CD4-positive, alpha-beta T cell (primary cell): ENCODE measurements at regions of chr1 and their contacts with region 1.

Region 1: DNA sequence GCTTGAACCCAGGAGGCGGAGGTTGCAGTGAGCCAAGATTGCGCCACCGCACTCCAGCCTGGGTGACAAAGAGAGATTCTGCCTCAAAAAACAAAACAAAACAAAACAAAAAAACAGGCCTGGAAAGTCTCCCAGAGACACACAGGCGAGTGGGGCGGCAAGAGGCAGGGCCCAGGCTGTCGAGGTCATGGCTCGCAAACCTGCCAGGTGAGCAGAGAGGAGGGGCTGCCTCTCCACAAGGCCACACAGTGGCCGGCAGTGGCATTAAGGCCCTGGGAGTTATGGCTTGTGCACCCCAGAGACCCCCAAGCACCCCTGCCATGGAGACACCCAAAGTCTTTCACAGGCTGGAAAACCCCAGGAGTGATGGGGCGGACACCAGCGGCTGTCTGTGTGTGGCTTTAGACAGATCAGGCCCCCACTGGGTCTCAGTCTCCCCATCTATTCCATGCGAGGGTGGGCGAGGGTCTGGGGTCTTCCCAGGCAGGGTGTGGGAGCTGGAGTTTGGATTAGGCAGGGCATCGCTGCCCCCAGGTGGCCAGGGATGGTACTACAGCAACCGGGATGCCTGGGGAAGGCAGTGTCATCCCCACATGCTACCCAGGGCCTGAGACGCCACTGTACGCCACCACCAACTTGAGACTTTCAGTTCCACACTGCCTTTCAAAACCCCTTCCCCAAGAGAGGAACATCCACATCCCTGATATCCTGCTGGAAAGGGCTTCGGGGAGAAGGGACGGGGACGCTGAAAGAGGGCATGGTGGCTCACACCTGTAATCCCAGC is 7.3 kb upstream of the CTRC start:
- DNase-seq: peak; percentile 55 to 84 (median 74)
- ATAC-seq: peak; percentile 77
- H3K4me3 ChIP-seq: no peak overlapping the region
- H3K4me3 Mint-ChIP-seq: no peak overlapping the region
- H3K27ac ChIP-seq: no peak overlapping the region
- H3K27ac Mint-ChIP-seq: peak overlapping the region; percentile 61
- H3K4me1 ChIP-seq: peaks cover 6% of the 10 kb centered on the region
- H3K4me1 Mint-ChIP-seq: no peaks in the 10 kb centered on the region
- H3K27me3 ChIP-seq: no peaks in the 10 kb centered on the region
- H3K27me3 Mint-ChIP-seq: no peaks in the 10 kb centered on the region
- CTCF ChIP-seq: peak; percentile 96

Region 2: DNA sequence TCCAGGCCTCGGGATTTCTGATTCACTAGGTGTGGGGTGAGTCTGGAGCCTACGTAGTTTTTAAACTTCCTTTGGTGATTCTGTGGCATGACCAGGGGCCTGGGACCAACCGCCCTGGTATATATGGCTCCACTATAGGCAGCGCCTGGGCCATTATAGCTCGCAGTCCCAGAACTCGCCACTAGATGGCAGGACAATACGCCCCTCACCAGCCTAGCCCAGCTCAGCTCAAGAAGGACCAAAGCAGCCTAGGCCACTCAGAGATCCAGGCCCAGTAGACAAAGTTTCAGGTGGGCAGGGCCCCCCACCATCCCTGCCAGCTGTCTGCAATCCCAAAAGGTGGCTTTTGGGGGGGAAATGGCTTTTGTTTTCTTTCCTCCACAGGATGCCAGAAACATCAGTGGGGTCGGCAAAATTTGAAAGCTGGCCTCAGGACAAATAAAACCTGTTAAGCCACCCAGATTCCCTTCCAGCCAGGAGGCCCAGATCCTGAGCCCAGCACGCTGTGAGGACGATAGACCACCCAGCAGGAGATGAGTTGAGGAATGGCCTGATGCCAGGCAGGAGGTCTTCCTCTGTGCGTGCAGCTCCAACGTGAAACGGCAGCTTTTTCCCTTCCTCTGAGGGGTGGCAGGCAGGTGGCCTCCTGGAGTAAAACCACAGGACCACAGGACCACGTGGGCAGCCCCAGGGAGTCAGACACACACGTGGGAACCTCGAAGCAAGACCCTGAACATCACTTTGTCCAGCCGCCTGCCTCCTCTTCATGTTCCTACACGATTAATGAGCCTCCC is 302.3 kb before region 1 on chr1:
- CTCF ChIA-PET with region 1: no interaction called
- POLR2A ChIA-PET with region 1: no interaction called
- intact Hi-C with region 1: loop called (anchors 1 to 5 kb)
- DNase-seq: peak; percentile 34 to 77 (median 59)
- ATAC-seq: peak; percentile 74
- H3K4me3 ChIP-seq: no peak overlapping the region
- H3K4me3 Mint-ChIP-seq: no peak overlapping the region
- H3K27ac ChIP-seq: no peak overlapping the region
- H3K27ac Mint-ChIP-seq: no peak overlapping the region
- H3K4me1 ChIP-seq: no peaks in the 10 kb centered on the region
- H3K4me1 Mint-ChIP-seq: no peaks in the 10 kb centered on the region
- H3K27me3 ChIP-seq: peaks cover 3 to 13% of the 10 kb centered on the region in 2 experiments
- H3K27me3 Mint-ChIP-seq: peaks cover 17% of the 10 kb centered on the region
- CTCF ChIP-seq: peak; percentile 86

Region 3: DNA sequence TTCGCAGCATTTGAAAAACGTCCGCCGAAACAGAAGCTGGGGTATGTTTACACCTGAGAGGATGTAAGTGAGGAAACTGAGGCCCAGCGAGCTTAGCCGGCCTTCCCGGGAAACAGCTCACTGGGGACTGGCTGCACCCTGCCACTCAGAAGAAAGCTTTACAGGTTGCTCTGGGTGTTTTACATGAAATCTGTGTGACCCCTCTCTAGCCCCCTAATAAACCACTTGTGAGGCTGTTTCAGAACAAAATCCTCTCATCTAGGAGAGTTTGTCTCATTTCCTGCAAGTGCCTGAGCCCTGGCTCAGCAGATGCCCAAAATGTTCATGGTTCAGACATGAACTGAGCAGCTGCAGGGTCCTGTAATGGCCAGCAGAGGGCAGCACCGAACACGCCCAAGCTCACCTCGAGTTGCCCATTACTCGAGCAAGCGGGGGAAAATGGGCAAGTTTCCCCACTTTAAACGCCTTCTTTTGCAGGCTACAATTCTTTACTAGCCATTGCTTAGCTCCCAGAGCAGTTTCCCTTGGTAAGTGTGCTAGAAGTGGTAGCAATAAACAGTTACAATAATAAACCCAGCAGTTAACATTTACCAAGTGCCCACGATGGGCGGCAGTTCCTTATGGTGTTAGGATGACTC is 107.5 kb before region 1 on chr1:
- CTCF ChIA-PET with region 1: interaction called, 67 read pairs
- POLR2A ChIA-PET with region 1: interaction called, 10 read pairs
- intact Hi-C with region 1: loop called (anchors 1 kb)
- DNase-seq: peak; percentile 59 to 88 (median 66)
- ATAC-seq: peak; percentile 89
- H3K4me3 ChIP-seq: no peak overlapping the region
- H3K4me3 Mint-ChIP-seq: no peak overlapping the region
- H3K27ac ChIP-seq: no peak overlapping the region
- H3K27ac Mint-ChIP-seq: no peak overlapping the region
- H3K4me1 ChIP-seq: peaks cover 6% of the 10 kb centered on the region
- H3K4me1 Mint-ChIP-seq: no peaks in the 10 kb centered on the region
- H3K27me3 ChIP-seq: peaks cover 1 to 4% of the 10 kb centered on the region in 2 experiments
- H3K27me3 Mint-ChIP-seq: peaks cover 11% of the 10 kb centered on the region
- CTCF ChIP-seq: peak; percentile 96

Region 4: DNA sequence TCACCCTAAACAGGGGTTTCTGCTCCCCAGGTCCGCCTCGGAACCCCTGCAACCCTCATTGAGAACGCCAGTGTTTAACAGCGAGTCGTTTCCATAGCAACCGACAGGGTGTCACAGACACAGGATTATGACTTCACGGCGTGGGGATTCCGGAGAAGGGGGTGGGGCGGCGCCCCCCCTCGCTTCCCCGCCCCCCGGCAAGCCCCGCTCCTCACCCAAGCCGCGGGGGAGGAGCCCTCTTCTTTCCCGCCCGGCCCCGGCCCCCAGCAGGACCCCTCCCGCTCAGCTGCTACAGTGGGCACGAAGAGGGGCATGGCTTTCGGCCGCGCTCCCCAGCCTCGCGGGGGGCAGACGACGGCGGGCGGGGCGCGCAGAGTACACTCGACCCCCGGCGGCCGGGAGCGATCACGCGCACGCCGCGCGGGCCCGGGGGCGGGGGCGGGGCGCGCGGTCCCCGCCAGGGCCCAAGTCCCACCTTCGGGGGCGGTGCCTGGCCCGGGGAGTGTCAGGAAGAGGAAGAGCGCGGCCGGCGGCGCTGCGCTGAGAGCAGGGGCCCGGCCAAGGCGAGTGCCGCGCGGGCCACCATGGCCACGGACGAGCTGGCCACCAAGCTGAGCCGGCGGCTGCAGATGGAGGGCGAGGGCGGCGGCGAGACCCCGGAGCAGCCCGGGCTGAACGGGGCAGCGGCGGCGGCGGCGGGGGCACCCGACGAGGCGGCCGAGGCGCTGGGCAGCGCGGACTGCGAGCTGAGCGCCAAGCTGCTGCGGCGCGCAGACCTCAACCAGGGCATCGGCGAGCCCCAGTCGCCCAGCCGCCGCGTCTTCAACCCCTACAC is 21.4 kb before region 1 on chr1 and contains the start of gene EFHD2:
- CTCF ChIA-PET with region 1: interaction called, 11 read pairs
- POLR2A ChIA-PET with region 1: interaction called, 3 read pairs
- intact Hi-C with region 1: loop called in 1 of 2 experiments (anchors 2 kb)
- DNase-seq: peak; percentile 62 to 99 (median 85)
- ATAC-seq: peak; percentile 79
- H3K4me3 ChIP-seq: peak within 1 kb of the TSS; percentile 94
- H3K4me3 Mint-ChIP-seq: peak within 1 kb of the TSS; percentile 97
- H3K27ac ChIP-seq: peak within 1 kb of the TSS; percentile 55 to 85
- H3K27ac Mint-ChIP-seq: peak within 1 kb of the TSS; percentile 94
- H3K4me1 ChIP-seq: peaks cover 68% of the 10 kb centered on the region
- H3K4me1 Mint-ChIP-seq: peaks cover 35% of the 10 kb centered on the region
- H3K27me3 ChIP-seq: no peaks in the 10 kb centered on the region
- H3K27me3 Mint-ChIP-seq: no peaks in the 10 kb centered on the region
- CTCF ChIP-seq: no peak
- total RNA-seq, gene EFHD2: 79.1 to 80.9 TPM

Region 5: DNA sequence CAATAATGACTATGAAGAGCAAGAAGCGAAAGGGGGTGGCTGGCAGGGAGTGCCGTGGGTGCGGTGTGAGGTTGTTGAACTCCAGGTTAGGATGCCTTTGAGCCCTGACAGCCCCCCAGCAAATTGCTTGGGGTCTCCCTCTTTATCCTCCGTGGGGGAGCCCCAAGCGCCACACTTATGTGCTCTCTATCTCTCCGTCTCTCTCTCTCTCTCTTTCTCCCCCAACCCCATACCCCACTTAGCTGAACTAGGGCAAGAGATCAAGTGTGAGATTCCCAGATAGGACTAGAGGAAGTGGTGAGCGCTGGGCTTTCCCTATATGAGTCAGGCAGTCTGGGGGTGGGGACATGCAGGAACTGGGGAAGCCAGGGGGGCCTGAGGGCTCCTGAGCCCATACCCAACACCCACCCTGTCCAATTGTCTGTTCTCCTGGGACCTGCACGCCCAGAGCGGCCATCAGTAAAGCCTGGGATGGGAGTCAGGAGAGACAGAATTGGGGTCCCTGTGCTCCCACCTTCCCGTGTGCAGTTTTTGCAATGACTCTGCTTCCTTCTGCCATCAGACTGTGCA is 13.5 kb before region 1 on chr1:
- CTCF ChIA-PET with region 1: interaction called, 11 read pairs
- POLR2A ChIA-PET with region 1: no interaction called
- intact Hi-C with region 1: no loop called
- DNase-seq: peak in 12 of 14 experiments; percentile 25 to 92 (median 53)
- ATAC-seq: peak; percentile 79
- H3K4me3 ChIP-seq: peak overlapping the region; percentile 3
- H3K4me3 Mint-ChIP-seq: peak overlapping the region; percentile 72
- H3K27ac ChIP-seq: peak overlapping the region; percentile 60 to 77
- H3K27ac Mint-ChIP-seq: peak overlapping the region; percentile 81
- H3K4me1 ChIP-seq: peaks cover 81% of the 10 kb centered on the region
- H3K4me1 Mint-ChIP-seq: peaks cover 55% of the 10 kb centered on the region
- H3K27me3 ChIP-seq: no peaks in the 10 kb centered on the region
- H3K27me3 Mint-ChIP-seq: no peaks in the 10 kb centered on the region
- CTCF ChIP-seq: no peak

Region 6: DNA sequence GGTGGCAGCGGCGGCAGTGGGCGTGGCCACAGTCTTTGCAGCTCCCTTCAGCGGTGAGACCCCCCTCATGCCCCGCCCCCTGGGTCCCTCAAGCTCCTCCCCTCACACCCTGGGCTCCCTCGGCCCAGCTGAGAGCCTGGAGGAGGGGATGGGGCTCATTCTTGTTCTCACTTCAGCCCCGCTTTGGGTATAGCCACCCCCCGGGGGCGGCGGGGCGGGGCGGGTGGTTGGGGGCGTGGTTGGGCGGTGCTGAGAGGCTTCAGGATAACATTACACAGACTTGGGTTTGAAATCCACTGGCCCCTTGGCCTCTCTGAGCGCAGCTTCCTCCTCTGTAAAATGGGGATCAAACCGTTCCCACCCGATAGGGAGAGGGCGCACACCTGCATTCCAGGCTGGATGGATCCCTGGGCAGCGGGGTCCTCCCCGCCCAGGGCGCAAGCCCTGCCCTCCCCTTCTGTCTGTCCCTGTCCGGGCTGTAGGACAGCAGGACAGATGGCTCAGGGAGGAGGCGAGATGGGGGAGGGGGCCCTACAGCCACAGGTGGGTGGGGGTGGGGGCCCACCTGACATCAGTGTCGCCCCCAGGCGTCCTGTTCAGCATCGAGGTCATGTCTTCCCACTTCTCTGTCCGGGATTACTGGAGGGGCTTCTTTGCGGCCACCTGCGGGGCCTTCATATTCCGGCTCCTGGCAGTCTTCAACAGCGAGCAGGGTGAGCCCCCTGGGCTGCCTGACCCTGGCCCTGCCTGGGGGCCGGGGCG is 595.9 kb after region 1 on chr1:
- CTCF ChIA-PET with region 1: no interaction called
- POLR2A ChIA-PET with region 1: no interaction called
- intact Hi-C with region 1: no loop called
- DNase-seq: peak in 12 of 14 experiments; percentile 12 to 63 (median 36)
- ATAC-seq: peak; percentile 85
- H3K4me3 ChIP-seq: peak overlapping the region; percentile 17
- H3K4me3 Mint-ChIP-seq: no peak overlapping the region
- H3K27ac ChIP-seq: no peak overlapping the region
- H3K27ac Mint-ChIP-seq: no peak overlapping the region
- H3K4me1 ChIP-seq: peaks cover 11% of the 10 kb centered on the region
- H3K4me1 Mint-ChIP-seq: no peaks in the 10 kb centered on the region
- H3K27me3 ChIP-seq: peaks cover 14 to 19% of the 10 kb centered on the region in 2 experiments
- H3K27me3 Mint-ChIP-seq: peaks cover 35% of the 10 kb centered on the region
- CTCF ChIP-seq: no peak